Calu3 (cell line): ENCODE measurements at regions of chr12 and their contacts with region 1.

Region 1: DNA sequence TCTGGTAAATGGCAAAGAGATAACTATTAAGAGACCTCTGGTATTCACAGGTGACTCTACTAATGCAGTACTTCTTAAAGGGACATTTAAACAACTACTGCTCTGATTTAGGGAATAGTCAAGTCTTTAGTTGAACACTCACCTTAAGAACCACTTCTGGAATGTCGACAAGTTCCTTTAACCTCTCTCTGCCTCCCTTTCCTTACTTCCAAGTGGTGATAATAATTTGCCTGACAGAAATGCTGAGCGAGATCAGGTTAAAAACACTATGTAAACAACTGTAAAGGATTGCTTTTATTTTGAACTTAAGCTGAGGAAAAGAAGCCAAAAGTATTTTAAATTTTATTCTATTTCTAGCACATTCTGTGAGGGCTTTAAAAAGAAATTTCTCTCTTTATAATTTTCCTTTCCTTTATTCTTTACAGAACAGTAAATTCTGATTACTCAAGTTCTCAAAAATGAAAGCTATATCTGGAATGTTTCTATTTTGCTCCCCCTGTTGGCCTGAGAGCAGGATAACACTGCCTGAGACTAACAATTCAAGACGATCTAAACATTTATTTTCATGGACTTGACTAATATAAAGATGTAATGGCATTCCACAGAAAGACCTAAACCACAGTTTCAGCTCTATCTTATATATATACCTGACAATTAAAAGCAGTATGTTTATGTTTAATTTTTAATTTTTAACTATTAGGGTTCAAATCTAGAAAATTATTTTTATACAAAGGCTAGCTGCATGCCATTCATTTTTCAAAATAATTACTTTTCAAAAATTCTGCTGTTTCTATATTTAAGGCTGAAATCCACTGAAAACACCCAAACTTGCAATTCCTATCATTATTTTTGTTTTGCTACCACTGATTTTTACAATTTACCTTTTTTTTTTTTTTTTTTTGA is 29.2 kb downstream of the ZCCHC8 start:
- DNase-seq: peak; percentile 47
- H3K4me3 Mint-ChIP-seq: no peak overlapping the region
- H3K27ac Mint-ChIP-seq: no peak overlapping the region
- H3K4me1 Mint-ChIP-seq: no peaks in the 10 kb centered on the region
- H3K27me3 Mint-ChIP-seq: no peaks in the 10 kb centered on the region
- CTCF ChIP-seq: peak; percentile 65

Region 2: DNA sequence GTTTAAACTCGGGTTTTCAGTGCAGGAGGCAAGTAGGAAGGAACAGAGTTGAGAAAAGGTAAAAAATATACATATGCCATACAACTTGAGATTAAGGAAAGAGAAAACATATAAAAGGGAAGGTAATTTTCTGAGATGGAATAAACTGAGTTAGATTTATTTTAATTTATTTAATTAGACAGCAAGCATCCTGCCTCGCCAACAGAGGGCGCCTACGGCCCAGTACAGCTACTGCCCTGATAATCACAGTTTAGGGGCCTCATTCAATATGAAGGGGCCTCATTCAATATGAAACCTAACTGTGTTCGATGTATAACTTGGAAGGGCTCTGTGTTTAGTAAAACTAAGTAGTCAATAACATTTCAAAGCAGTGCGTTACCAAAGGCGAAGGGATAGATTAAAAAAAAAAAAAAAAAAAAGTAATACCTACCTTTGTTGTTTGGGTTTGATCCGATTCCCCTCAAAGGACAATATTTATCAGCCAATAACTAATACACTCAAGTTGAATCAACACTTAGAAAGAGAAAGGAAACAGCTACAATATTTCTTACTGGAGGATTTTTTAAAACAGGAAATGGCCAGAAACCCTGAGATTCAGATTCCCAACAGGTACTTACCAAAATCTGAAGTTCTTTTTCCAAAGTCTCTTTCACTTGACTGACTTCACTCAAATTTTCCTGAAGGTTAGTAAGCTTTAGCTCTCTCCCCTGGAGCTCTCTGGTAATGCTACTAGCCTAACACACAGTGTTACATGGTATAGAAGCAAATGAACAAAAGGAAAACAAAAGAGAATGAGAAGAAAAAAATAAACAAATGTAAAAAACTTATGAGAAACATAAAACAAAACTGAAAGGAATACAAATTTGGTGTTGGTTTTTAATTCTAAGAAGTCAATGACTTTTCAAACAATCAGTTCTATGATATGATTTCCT is 135.3 kb before region 1 on chr12:
- CTCF ChIA-PET with region 1: interaction called, 10 read pairs
- intact Hi-C with region 1: loop called (anchors 2 kb)
- DNase-seq: peak; percentile 57
- H3K4me3 Mint-ChIP-seq: no peak overlapping the region
- H3K27ac Mint-ChIP-seq: no peak overlapping the region
- H3K4me1 Mint-ChIP-seq: no peaks in the 10 kb centered on the region
- H3K27me3 Mint-ChIP-seq: no peaks in the 10 kb centered on the region
- CTCF ChIP-seq: peak; percentile 70

Region 3: DNA sequence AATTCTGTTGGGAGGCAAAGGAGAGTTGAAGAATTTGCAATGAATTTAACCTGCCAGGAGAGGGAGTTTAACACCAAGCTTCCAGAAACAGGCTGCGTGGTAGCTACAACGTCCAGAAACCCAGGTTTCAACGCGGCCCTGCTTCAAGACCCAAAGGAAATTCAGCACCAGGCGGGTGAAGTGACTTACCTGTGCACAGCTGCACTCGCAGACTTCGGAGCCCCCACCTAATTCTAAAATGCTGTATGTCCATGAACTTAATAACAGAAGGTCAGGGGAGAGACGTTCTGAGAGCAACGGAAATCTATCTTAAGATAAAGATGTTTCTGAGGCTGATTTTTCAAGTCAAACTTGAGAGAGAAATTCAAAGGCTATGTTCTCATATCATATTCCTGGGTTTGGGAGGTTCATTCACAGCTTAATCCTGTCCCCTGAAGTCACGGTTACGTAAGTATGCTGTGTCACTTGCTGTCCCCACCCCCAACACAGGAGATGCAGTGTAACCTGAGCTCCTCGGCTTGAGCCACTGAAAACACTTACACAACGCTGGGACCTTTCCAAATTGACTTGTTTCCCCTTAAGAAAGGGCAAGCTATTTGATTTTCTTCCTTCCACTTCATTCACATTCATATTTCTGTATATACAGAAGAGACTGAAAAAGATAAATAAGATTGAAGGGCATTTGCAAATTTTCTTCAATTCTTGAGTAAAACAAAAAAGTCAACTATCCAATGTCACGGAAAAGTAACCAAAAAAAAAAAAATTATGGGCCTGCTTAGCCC is 71.8 kb before region 1 on chr12:
- CTCF ChIA-PET with region 1: interaction called, 108 read pairs
- intact Hi-C with region 1: loop called (anchors 1 kb)
- DNase-seq: peak; percentile 86
- H3K4me3 Mint-ChIP-seq: peak overlapping the region; percentile 63
- H3K27ac Mint-ChIP-seq: peak overlapping the region; percentile 94
- H3K4me1 Mint-ChIP-seq: peaks cover 35% of the 10 kb centered on the region
- H3K27me3 Mint-ChIP-seq: no peaks in the 10 kb centered on the region
- CTCF ChIP-seq: peak; percentile 70

Region 4: DNA sequence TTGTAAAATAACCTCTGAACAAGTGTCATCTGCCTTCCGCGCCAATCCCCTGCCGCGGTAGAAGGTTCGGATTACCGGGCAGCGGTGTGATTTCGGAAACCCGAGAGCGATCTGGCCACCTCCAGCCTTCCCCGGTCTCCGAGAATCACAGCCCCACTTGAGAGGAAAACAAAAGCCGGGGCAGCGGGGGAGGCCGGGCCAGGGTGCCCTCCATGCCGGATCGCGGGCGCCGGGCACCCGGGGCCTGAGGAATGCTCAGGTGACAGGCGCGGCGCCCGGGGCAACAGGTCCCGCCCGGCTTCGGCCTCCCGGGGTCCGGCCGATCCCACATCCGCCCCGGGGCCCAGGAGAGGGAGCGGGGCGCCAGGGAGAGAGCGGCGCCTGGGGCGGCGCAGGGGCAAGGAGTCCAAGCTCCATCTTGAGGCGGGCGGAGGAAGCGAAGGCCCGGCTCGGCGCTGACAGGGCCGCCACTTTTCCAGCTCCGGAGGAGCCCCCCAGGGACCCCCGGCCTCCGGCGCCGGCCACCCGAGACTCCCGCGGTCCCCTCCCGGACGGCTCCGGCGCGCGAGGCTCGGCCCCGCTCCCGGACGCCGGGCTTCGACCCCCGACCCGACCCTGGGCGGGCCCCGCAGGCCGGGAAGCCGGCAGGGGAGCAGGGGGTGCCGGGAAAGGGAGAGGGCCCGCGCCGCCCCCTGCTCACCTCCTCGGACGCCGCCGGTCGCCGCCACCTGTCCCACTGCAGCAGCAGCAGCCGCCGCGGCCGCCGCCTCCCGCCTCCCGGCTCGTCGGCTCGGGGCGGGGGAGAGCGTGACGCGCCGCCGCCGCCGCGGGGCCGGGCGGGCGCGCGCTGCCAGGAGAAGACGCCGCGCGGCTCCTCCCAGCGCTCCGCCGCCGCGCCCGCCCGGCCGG is 49.5 kb before region 1 on chr12 and contains the start of gene CLIP1:
- CTCF ChIA-PET with region 1: interaction called, 6 read pairs
- intact Hi-C with region 1: loop called (anchors 2 kb)
- DNase-seq: peak; percentile 87
- H3K4me3 Mint-ChIP-seq: peak within 1 kb of the TSS; percentile 83
- H3K27ac Mint-ChIP-seq: peak within 1 kb of the TSS; percentile 96
- H3K4me1 Mint-ChIP-seq: peaks cover 18% of the 10 kb centered on the region
- H3K27me3 Mint-ChIP-seq: no peaks in the 10 kb centered on the region
- CTCF ChIP-seq: no peak
- total RNA-seq, gene CLIP1: 95.3 and 109 TPM in 2 replicates